ENCODE measurements at regions of chr2 and their contacts with region 1.

Region 1: GRCh38 chr2:25362049-25362433 is 20.3 kb upstream of the DNMT3A start:
- DNase-seq: peak; percentile 97
- H3K4me3 Mint-ChIP-seq: peak overlapping the region; percentile 77
- H3K27ac Mint-ChIP-seq: peak overlapping the region; percentile 93
- H3K4me1 Mint-ChIP-seq: peaks cover 15% of the 10 kb centered on the region
- H3K27me3 Mint-ChIP-seq: no peaks in the 10 kb centered on the region

Region 2: DNA sequence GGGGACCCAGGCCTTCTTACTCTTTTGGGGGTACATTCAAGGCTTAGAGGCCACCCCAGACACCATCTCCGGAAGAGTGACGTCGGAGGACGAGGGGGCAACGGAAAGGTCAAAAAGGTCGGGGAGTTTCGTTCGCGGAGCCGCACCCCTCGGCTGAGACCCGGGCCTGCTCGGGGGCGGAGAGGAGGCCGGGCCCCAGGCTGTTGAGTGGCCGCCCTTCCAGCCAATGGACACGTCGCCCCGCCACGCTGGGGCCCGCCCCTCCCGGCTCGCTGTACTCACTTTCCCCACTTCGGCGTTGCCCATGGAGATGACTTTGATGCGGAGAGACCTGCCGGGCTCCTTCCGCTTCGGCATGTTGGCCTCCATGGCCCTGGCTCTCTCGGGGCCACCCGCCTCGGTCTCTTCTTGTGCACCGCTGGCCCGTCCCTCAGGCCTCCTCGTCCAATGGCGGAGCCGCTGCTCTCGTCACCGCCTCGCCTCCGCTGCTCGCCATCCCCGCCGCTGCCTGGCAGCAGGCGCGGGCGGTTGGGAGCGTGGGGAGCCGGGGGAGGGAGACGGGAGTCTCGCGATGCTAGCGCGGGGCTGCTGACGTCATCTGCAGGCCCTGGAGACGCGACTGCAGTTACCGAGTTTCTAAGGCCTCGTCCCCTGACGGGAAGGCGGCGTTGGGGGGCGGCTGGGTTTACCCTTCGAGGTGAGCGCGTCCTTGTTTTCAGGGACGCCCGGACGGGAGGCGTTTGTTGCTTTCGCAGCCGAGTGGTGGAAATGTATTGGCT is 390.3 kb before region 1 on chr2 and contains the start of gene DNAJC27:
- CTCF ChIA-PET with region 1: no interaction called
- POLR2A ChIA-PET with region 1: no interaction called
- intact Hi-C with region 1: loop called (anchors 10 kb)
- DNase-seq: peak; percentile 98
- H3K4me3 Mint-ChIP-seq: peak within 1 kb of the TSS; percentile 96
- H3K27ac Mint-ChIP-seq: peak within 1 kb of the TSS; percentile 100
- H3K4me1 Mint-ChIP-seq: peaks cover 6% of the 10 kb centered on the region
- H3K27me3 Mint-ChIP-seq: no peaks in the 10 kb centered on the region
- total RNA-seq, gene DNAJC27: 5.5 to 6.9 TPM

Region 3: GRCh38 chr2:25041928-25042320 is 320.1 kb before region 1 on chr2 and contains the start of gene EFR3B:
- CTCF ChIA-PET with region 1: no interaction called
- POLR2A ChIA-PET with region 1: no interaction called
- intact Hi-C with region 1: no loop called
- DNase-seq: peak; percentile 93
- H3K4me3 Mint-ChIP-seq: peak within 1 kb of the TSS; percentile 73
- H3K27ac Mint-ChIP-seq: no peak within 1 kb of the TSS
- H3K4me1 Mint-ChIP-seq: peaks cover 30% of the 10 kb centered on the region
- H3K27me3 Mint-ChIP-seq: peaks cover 39% of the 10 kb centered on the region
- total RNA-seq, gene EFR3B: 1.5 TPM

Region 4: GRCh38 chr2:25309402-25309801 is 52.6 kb before region 1 on chr2:
- CTCF ChIA-PET with region 1: interaction called, 37 read pairs
- POLR2A ChIA-PET with region 1: interaction called, 4 read pairs
- intact Hi-C with region 1: no loop called
- DNase-seq: peak; percentile 75
- H3K4me3 Mint-ChIP-seq: no peak overlapping the region
- H3K27ac Mint-ChIP-seq: no peak overlapping the region
- H3K4me1 Mint-ChIP-seq: peaks cover 87% of the 10 kb centered on the region
- H3K27me3 Mint-ChIP-seq: no peaks in the 10 kb centered on the region

Region 5: GRCh38 chr2:25337276-25337675 is 24.8 kb before region 1 on chr2:
- CTCF ChIA-PET with region 1: interaction called, 21 read pairs
- POLR2A ChIA-PET with region 1: no interaction called
- intact Hi-C with region 1: loop called (anchors 1 kb)
- DNase-seq: peak; percentile 32
- H3K4me3 Mint-ChIP-seq: no peak overlapping the region
- H3K27ac Mint-ChIP-seq: peak overlapping the region; percentile 55
- H3K4me1 Mint-ChIP-seq: peaks cover 67% of the 10 kb centered on the region
- H3K27me3 Mint-ChIP-seq: no peaks in the 10 kb centered on the region

Region 6: DNA sequence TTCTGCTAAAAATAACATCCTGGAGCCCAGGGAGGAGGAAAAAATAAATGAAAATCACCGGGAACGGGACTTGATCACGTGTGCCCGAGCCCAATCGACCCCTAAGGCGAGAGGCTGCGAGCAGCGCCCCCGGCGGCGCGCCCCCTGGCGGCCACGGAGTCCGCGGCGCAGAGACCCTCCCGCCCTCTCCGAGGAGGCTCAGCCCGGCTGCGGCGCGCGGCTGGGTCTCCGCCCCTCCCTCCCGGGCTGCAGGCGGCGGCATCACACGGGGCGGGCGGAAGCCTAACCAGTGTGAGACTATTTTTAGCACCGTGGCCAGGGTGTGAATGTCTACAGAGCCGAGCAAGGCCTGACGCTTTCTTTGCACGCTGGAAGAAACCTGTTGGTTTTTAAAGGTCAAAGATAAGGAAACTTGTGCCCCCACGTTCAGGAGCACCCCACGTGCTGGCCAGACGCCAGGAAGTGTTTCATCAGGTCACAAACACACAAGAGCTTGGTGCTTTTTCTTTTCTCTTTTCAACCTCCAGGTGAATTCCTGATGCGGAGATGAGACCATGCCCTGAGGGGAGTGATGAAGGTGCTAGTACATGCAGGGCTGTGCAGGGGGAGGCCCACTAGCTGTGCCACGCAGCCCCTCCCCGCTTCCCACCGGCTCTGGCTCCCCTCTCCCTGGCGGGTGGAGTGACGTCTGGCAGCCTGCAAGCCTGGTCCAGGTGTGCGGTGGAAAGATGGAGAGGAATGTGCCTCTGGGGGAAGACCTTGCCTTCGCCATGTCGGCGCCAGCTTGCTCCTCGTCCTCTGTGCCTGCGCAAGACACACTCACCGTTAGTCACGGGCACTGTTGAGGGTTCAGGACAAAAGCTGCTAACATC is 14.9 kb after region 1 on chr2:
- CTCF ChIA-PET with region 1: interaction called, 83 read pairs
- POLR2A ChIA-PET with region 1: interaction called, 18 read pairs
- intact Hi-C with region 1: loop called (anchors 1 kb)
- DNase-seq: peak; percentile 96
- H3K4me3 Mint-ChIP-seq: peak overlapping the region; percentile 50
- H3K27ac Mint-ChIP-seq: peak overlapping the region; percentile 96
- H3K4me1 Mint-ChIP-seq: peaks cover 27% of the 10 kb centered on the region
- H3K27me3 Mint-ChIP-seq: no peaks in the 10 kb centered on the region

Region 7: DNA sequence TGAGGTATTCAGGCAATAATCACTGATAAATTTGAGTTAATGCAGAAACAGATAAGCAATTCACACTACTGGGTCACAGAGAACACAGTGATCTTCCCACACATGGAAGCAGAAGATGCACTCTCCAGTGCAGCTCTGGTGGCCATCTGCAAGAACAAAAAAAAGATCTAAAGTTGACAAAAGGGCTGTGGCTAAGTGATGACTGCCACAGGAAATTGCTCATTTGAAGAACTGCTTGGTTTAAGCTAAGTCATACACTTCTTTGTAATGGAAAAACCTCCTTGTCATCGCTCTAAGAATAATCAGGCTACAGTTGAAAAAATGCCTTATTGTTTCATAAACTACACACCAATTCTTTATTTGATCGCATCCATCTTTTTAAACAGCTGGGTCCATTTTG is 196.2 kb after region 1 on chr2:
- CTCF ChIA-PET with region 1: interaction called, 15 read pairs
- POLR2A ChIA-PET with region 1: no interaction called
- intact Hi-C with region 1: no loop called
- DNase-seq: peak; percentile 63
- H3K4me3 Mint-ChIP-seq: no peak overlapping the region
- H3K27ac Mint-ChIP-seq: peak overlapping the region; percentile 80
- H3K4me1 Mint-ChIP-seq: peaks cover 57% of the 10 kb centered on the region
- H3K27me3 Mint-ChIP-seq: no peaks in the 10 kb centered on the region

Region 8: DNA sequence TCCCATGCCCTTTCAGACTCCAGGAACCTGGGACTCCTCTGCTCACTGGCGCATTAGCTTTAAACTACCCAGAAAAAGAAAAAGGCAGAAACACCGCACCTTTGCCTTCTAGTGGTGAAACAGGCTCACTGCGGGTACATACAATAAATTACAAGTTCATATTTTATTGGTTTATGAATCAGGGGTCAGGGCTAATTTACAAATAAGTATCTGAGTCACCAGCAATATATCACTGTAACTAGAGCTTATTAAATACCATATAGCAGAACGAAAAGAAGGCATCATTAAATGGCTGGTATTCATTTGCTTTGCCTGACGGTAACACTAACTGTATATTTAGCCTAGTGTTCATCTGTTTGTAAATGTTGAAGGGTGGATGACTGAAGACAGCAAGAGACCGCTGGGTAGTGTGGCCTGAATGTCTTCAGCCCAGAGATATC is 338.2 kb after region 1 on chr2:
- CTCF ChIA-PET with region 1: no interaction called
- POLR2A ChIA-PET with region 1: no interaction called
- intact Hi-C with region 1: no loop called
- DNase-seq: peak; percentile 39
- H3K4me3 Mint-ChIP-seq: no peak overlapping the region
- H3K27ac Mint-ChIP-seq: no peak overlapping the region
- H3K4me1 Mint-ChIP-seq: peaks cover 4% of the 10 kb centered on the region
- H3K27me3 Mint-ChIP-seq: no peaks in the 10 kb centered on the region